Right cardiac atrium (tissue), 5 donors: ENCODE measurements at regions of chr1 and their contacts with region 1.

Region 1: GRCh38 chr1:97524211-97524610 is 396.6 kb downstream of the DPYD start:
- DNase-seq: no peak
- ATAC-seq: no peak
- H3K4me3 ChIP-seq: no peak overlapping the region
- H3K27ac ChIP-seq: no peak overlapping the region
- H3K4me1 ChIP-seq: no peaks in the 10 kb centered on the region
- H3K27me3 ChIP-seq: no peaks in the 10 kb centered on the region

Region 2: DNA sequence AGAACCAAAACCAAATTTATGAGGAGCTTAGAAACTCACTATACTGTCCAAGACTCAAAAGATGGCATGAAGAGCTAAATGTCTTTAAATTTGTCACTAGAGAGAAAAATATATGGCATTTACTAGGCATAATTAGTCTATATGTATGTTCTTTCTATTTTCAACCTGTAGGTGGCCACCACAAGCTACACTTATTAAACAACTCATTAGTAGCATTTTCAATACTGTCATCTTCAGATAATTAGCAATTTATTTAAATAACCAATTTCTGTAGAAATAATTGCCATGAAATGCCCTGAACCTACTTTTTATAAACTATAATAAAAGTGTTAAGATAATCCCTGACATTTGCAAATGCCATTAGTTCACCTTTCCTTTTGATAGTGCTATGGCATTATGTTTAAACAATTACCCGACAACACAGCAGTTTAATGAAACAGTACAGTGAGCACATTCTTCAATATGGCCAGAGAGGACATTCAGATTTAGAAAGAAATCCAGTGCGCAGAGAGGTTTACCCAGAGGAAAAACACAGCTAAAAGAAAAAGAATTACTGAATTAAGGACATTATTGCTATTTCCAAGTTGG is 280.1 kb before region 1 on chr1:
- intact Hi-C with region 1: loop called in 2 of 4 experiments (anchors 10 kb)
- DNase-seq: no peak
- ATAC-seq: no peak
- H3K4me3 ChIP-seq: no peak overlapping the region
- H3K27ac ChIP-seq: no peak overlapping the region
- H3K4me1 ChIP-seq: no peaks in the 10 kb centered on the region
- H3K27me3 ChIP-seq: no peaks in the 10 kb centered on the region

Region 3: GRCh38 chr1:97482022-97482421 is 42.2 kb before region 1 on chr1:
- intact Hi-C with region 1: no loop called
- DNase-seq: no peak
- ATAC-seq: no peak
- H3K4me3 ChIP-seq: no peak overlapping the region
- H3K27ac ChIP-seq: no peak overlapping the region
- H3K4me1 ChIP-seq: no peaks in the 10 kb centered on the region
- H3K27me3 ChIP-seq: no peaks in the 10 kb centered on the region